ENCODE measurements at regions of chr21 and their contacts with region 1.

Region 1: DNA sequence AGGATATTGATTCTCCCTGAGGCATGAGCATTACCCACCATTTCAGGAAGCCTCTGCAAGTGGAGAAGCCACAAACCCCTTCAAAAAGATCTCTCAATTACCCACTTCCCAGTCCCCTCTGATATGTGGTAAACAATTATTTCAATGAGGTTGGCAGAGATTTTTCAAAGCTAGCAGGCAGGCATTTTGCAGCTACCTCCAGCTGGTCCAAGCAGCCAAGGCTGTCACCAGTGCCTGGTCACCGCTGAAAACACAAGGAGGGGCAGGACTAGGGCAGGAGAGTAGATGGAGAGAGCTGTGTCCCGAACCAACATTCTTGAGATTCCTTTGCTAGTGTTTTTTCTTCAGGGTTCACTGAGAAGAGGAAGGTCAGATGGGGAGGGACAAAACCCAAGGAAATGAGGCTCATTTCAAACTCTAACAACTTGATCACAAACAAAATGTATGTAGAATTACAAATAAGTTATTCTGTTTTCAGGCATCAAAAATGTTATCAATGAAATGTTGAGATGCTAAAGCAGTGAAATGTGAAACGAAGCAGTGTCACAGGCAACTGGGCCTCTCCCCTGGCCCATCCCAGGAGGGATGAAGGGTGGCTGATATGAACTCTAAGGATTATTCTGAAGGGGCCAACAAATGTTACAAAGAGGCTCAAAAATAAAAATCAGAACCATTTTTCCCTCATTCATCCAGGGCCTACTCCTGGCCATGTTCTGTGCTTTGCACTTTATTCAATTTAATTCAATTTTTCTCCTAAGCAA is 22.3 kb downstream of the APP start:
- DNase-seq: peak in 1 of 9 experiments; percentile 8
- ATAC-seq: peak; percentile 31
- H3K4me3 ChIP-seq: no peak overlapping the region
- H3K4me3 Mint-ChIP-seq: peak overlapping the region; percentile 53
- H3K27ac ChIP-seq: no peak overlapping the region
- H3K27ac Mint-ChIP-seq: no peak overlapping the region
- H3K4me1 ChIP-seq: peaks cover 19% of the 10 kb centered on the region
- H3K4me1 Mint-ChIP-seq: peaks cover 17% of the 10 kb centered on the region
- H3K27me3 ChIP-seq: no peaks in the 10 kb centered on the region
- H3K27me3 Mint-ChIP-seq: peaks cover 3% of the 10 kb centered on the region
- CTCF ChIP-seq: no peak

Region 2: DNA sequence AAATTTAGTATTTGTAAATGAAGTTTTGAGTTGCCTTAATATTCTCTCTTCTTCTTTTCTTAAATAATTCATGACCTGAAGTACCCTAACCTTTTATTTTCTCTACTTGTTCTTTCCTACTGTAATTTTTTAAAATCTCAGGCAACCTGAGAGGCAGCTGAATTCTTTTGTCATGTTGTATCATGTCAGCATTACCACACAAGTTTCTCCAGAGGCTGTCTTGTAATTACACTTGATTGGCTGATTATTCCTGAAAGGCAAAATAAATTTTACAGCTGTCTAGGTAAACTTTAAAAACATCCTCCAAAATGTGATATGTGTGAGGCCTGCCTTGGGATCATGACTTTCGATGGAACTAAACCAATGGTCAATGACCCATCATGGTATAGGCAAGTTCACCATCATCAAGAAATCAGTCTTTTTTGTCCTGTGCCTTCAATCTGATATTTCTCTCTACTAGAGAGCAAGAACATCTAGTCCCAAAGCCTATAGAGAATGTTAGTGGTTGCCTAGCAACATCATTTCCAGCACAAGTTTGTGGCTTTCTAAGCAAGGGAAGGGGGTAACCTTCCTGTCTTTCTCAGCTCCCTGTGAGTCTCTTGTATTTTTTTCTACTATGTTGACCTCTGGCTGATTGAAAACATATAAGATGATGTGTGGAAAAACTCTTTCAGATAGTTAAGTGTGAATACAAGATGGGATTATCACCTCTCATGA is 298.0 kb before region 1 on chr21:
- CTCF ChIA-PET with region 1: no interaction called
- POLR2A ChIA-PET with region 1: no interaction called
- intact Hi-C with region 1: no loop called
- DNase-seq: no peak
- ATAC-seq: no peak
- H3K4me3 ChIP-seq: no peak overlapping the region
- H3K4me3 Mint-ChIP-seq: no peak overlapping the region
- H3K27ac ChIP-seq: no peak overlapping the region
- H3K27ac Mint-ChIP-seq: no peak overlapping the region
- H3K4me1 ChIP-seq: no peaks in the 10 kb centered on the region
- H3K4me1 Mint-ChIP-seq: no peaks in the 10 kb centered on the region
- H3K27me3 ChIP-seq: no peaks in the 10 kb centered on the region
- H3K27me3 Mint-ChIP-seq: peaks cover 2% of the 10 kb centered on the region
- CTCF ChIP-seq: no peak

Region 3: GRCh38 chr21:26070822-26071425 is 77.3 kb before region 1 on chr21:
- CTCF ChIA-PET with region 1: no interaction called
- POLR2A ChIA-PET with region 1: no interaction called
- intact Hi-C with region 1: loop called in 1 of 2 experiments (anchors 5 kb)
- DNase-seq: peak in 8 of 9 experiments; percentile 5 to 62 (median 24)
- ATAC-seq: peak; percentile 88
- H3K4me3 ChIP-seq: peak overlapping the region; percentile 7 to 34
- H3K4me3 Mint-ChIP-seq: peak overlapping the region; percentile 87
- H3K27ac ChIP-seq: peak overlapping the region in 1 of 2 experiments; percentile 31
- H3K27ac Mint-ChIP-seq: peak overlapping the region; percentile 95
- H3K4me1 ChIP-seq: peaks cover 9% of the 10 kb centered on the region
- H3K4me1 Mint-ChIP-seq: peaks cover 42% of the 10 kb centered on the region
- H3K27me3 ChIP-seq: no peaks in the 10 kb centered on the region
- H3K27me3 Mint-ChIP-seq: no peaks in the 10 kb centered on the region
- CTCF ChIP-seq: no peak

Region 4: DNA sequence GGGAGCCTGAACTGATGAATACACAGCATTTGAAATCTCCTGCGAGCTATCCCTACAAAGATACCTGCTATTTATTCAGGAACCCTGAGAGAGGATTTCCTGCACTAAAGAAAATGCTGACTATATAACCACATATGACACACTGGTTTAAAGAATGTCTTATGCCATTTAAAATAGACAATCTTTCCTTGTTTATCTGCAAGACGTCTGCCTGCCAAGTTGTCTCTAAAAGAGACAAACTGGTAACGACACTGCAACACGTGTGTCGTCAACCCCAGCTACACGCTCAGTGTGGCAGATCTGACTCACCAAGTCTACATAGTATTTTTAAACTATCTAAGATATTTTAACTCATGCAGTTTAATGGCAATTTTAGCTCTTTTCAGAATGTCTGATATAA is 20.3 kb before region 1 on chr21:
- CTCF ChIA-PET with region 1: no interaction called
- POLR2A ChIA-PET with region 1: no interaction called
- intact Hi-C with region 1: no loop called
- DNase-seq: no peak
- ATAC-seq: no peak
- H3K4me3 ChIP-seq: no peak overlapping the region
- H3K4me3 Mint-ChIP-seq: no peak overlapping the region
- H3K27ac ChIP-seq: no peak overlapping the region
- H3K27ac Mint-ChIP-seq: no peak overlapping the region
- H3K4me1 ChIP-seq: no peaks in the 10 kb centered on the region
- H3K4me1 Mint-ChIP-seq: no peaks in the 10 kb centered on the region
- H3K27me3 ChIP-seq: no peaks in the 10 kb centered on the region
- H3K27me3 Mint-ChIP-seq: no peaks in the 10 kb centered on the region
- CTCF ChIP-seq: no peak

Measured in CD8-positive, alpha-beta T cell (primary cell).